ENCODE measurements at regions of chr2 and their contacts with region 1.

Region 1: GRCh38 chr2:218168635-218169462 is 2.1 kb upstream of the CXCR1 start:
- DNase-seq: peak; percentile 45
- H3K4me3 ChIP-seq: no peak overlapping the region
- H3K27ac ChIP-seq: no peak overlapping the region
- H3K4me1 ChIP-seq: no peaks in the 10 kb centered on the region
- H3K27me3 ChIP-seq: peaks cover 15 to 18% of the 10 kb centered on the region in 2 experiments
- CTCF ChIP-seq: peak; percentile 64 to 81
- POLR2A ChIP-seq: no peak

Region 2: GRCh38 chr2:218257390-218257981 is 88.6 kb after region 1 on chr2:
- CTCF ChIA-PET with region 1: no interaction called
- POLR2A ChIA-PET with region 1: no interaction called
- dilution Hi-C with region 1: no loop called
- intact Hi-C with region 1: loop called (anchors 5 kb)
- DNase-seq: peak; percentile 24
- H3K4me3 ChIP-seq: no peak overlapping the region
- H3K27ac ChIP-seq: no peak overlapping the region
- H3K4me1 ChIP-seq: peaks cover 17% of the 10 kb centered on the region
- H3K27me3 ChIP-seq: no peaks in the 10 kb centered on the region
- CTCF ChIP-seq: peak; percentile 60 to 69
- POLR2A ChIP-seq: peak; percentile 24

Region 3: GRCh38 chr2:218659258-218659987 is 490.6 kb after region 1 on chr2 and contains the starts of genes BCS1L and ZNF142:
- CTCF ChIA-PET with region 1: no interaction called
- POLR2A ChIA-PET with region 1: no interaction called
- dilution Hi-C with region 1: no loop called
- intact Hi-C with region 1: no loop called
- DNase-seq: peak; percentile 88
- H3K4me3 ChIP-seq: peak within 1 kb of the TSS; percentile 74 to 95 (median 87)
- H3K27ac ChIP-seq: peak within 1 kb of the TSS; percentile 24
- H3K4me1 ChIP-seq: peaks cover 9% of the 10 kb centered on the region
- H3K27me3 ChIP-seq: no peaks in the 10 kb centered on the region
- CTCF ChIP-seq: no peak
- POLR2A ChIP-seq: peak; percentile 73
- total RNA-seq, gene BCS1L: 43.0 and 57.4 TPM in 2 replicates
- total RNA-seq, gene ZNF142: 31.4 and 34.5 TPM in 2 replicates

Measured in endothelial cell of umbilical vein (primary cell).